CD14-positive monocyte (primary cell): ENCODE measurements at regions of chr7 and their contacts with region 1.

Region 1: DNA sequence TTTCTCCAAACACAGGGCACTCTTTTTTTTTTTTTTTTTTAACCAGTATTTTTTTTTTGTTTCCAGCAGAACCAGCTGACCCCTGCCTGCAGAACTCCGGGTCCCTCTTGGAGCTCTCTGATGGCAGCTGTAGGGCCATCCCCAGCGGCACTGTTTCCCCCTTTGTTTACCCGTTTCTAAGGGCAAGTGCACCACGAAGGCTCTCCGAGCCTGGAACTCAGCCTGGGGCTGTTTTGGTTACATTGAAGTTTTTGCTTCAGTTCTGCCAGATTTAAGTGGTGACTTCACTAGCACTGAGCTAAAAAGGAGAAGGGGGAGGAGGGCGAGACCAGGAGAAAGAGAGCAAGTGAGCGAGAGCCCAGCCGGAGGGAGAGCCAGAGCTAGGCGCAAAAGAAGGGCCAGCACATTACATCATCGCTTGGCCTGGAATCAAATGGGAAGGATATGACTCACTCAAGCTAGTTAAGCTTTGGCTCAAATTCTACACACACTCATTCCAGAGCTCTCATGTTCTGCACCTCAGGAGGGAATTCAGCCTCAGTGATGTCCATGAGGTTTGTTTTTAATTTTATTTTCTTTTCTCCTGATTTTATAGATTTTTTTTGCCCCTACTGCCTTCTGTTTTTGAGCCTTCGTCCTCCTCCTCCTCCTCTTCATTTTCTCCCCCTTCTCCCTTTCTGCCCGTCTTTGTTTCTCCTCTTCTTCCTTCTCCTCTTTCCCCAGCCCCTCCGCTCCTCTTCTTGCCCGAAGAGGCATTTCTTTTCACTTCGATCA is 272.3 kb downstream of the TRIL start:
- DNase-seq: peak; percentile 94 to 96 (median 96)
- H3K4me3 ChIP-seq: peak overlapping the region; percentile 76 to 100 (median 93)
- H3K4me3 Mint-ChIP-seq: no peak overlapping the region
- H3K27ac ChIP-seq: peak overlapping the region; percentile 92 to 95
- H3K27ac Mint-ChIP-seq: no peak overlapping the region
- H3K4me1 ChIP-seq: peaks cover 68 to 89% of the 10 kb centered on the region in 2 donors
- H3K4me1 Mint-ChIP-seq: peaks cover 14% of the 10 kb centered on the region
- H3K27me3 ChIP-seq: no peaks in the 10 kb centered on the region
- H3K27me3 Mint-ChIP-seq: no peaks in the 10 kb centered on the region
- CTCF ChIP-seq: no peak

Region 2: GRCh38 chr7:28408960-28409715 is 276.7 kb before region 1 on chr7:
- intact Hi-C with region 1: loop called (anchors 5 to 10 kb)
- DNase-seq: peak; percentile 92 to 98 (median 94)
- H3K4me3 ChIP-seq: peak overlapping the region; percentile 40 to 76 (median 48)
- H3K4me3 Mint-ChIP-seq: peak overlapping the region; percentile 97 to 99
- H3K27ac ChIP-seq: peak overlapping the region in 1 of 2 donors; percentile 49
- H3K27ac Mint-ChIP-seq: peak overlapping the region; percentile 30 to 95 (median 91)
- H3K4me1 ChIP-seq: peaks cover 26 to 28% of the 10 kb centered on the region in 2 donors
- H3K4me1 Mint-ChIP-seq: peaks cover 38% of the 10 kb centered on the region
- H3K27me3 ChIP-seq: peaks cover 58 to 85% of the 10 kb centered on the region in 2 donors
- H3K27me3 Mint-ChIP-seq: peaks cover 71 to 96% (median 81%) of the 10 kb centered on the region in 3 donors
- CTCF ChIP-seq: no peak